ENCODE measurements at regions of chr2 and their contacts with region 1.

Region 1: GRCh38 chr2:75608684-75609333 is 37.8 kb upstream of the MRPL19 start:
- DNase-seq: peak; percentile 33
- ATAC-seq: peak; percentile 92
- H3K4me3 ChIP-seq: peak overlapping the region; percentile 14 to 44; a peak in 3 of 4 replicates
- H3K27ac ChIP-seq: no peak overlapping the region
- H3K4me1 ChIP-seq: peaks cover 8% of the 10 kb centered on the region
- H3K27me3 ChIP-seq: peaks cover 15% of the 10 kb centered on the region
- CTCF ChIP-seq: peak; percentile 98

Region 2: DNA sequence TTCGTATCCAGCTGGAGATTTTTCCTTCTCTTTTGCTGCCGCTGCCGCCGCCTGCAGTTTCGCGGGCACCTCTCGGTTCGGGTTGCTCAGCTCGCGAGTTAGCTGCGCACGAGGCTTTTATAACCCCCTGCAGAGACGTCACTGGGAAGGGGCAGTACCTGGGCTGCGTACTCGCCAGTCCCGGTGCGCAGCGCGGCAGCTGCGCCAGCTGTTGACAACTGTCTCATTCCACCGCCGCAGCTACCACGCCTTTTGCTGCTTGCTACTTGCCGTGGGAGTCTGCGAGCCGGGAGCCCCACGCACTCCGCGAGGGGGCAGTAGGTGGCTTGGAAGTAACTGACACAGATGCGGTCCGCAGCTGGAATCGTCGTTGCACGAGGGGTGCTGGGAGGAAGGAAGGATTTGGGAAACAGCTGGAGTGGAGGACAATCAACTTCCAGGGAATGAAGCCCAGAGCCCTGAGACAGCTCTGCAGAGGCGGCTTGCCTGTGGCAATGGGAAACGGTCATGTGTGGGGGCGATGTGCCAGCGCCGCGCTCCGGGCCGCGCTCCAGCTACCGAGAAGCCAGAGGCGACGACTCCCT is 409.3 kb before region 1 on chr2 and contains the start of gene TACR1:
- CTCF ChIA-PET with region 1: no interaction called
- POLR2A ChIA-PET with region 1: no interaction called
- in situ Hi-C with region 1: no loop called
- intact Hi-C with region 1: loop called (anchors 5 kb)
- DNase-seq: no peak
- ATAC-seq: peak; percentile 67
- H3K4me3 ChIP-seq: peak within 1 kb of the TSS; percentile 12 to 21; a peak in 3 of 4 replicates
- H3K27ac ChIP-seq: no peak within 1 kb of the TSS
- H3K4me1 ChIP-seq: peaks cover 12% of the 10 kb centered on the region; the same call in 1 of the 2 replicates
- H3K27me3 ChIP-seq: peaks cover 36% of the 10 kb centered on the region
- CTCF ChIP-seq: peak; percentile 63
- total RNA-seq, gene TACR1: not detected

Region 3: DNA sequence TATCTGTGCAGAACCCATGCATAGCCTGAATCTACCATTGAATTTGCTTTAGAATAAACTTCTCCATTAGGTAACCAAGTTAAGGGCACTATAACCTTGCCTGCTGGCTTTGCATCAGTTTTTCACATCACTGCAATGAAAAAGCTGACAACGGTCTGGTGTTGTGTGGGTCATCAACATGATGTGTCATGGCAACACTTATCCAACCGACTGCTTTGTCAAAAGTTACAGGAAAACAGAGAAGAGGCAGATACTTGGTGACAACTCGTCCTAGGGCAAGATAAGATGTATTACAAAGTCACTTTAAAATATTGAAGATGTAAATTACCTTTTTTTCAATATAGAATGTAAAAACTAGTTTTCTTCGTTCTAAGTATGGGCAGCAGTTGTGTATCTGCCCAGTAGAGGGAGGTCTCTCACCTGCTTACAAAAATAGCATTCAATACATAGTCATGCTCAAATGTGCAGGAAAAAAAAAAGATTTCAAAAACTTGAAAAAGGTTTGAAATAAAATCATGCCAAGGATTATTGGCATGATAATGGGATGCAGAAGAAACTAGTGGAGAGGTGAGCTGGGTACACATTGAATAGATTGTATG is 144.4 kb before region 1 on chr2:
- CTCF ChIA-PET with region 1: no interaction called
- POLR2A ChIA-PET with region 1: no interaction called
- in situ Hi-C with region 1: no loop called
- intact Hi-C with region 1: loop called (anchors 1 kb)
- DNase-seq: no peak
- ATAC-seq: 0 out of 2 replicates have a peak, but pooled peaks have one; percentile 62
- H3K4me3 ChIP-seq: no peak overlapping the region
- H3K27ac ChIP-seq: no peak overlapping the region
- H3K4me1 ChIP-seq: no peaks in the 10 kb centered on the region
- H3K27me3 ChIP-seq: peaks cover 16% of the 10 kb centered on the region
- CTCF ChIP-seq: peak; percentile 68